ENCODE measurements at regions of chr3 and their contacts with region 1.

Region 1: DNA sequence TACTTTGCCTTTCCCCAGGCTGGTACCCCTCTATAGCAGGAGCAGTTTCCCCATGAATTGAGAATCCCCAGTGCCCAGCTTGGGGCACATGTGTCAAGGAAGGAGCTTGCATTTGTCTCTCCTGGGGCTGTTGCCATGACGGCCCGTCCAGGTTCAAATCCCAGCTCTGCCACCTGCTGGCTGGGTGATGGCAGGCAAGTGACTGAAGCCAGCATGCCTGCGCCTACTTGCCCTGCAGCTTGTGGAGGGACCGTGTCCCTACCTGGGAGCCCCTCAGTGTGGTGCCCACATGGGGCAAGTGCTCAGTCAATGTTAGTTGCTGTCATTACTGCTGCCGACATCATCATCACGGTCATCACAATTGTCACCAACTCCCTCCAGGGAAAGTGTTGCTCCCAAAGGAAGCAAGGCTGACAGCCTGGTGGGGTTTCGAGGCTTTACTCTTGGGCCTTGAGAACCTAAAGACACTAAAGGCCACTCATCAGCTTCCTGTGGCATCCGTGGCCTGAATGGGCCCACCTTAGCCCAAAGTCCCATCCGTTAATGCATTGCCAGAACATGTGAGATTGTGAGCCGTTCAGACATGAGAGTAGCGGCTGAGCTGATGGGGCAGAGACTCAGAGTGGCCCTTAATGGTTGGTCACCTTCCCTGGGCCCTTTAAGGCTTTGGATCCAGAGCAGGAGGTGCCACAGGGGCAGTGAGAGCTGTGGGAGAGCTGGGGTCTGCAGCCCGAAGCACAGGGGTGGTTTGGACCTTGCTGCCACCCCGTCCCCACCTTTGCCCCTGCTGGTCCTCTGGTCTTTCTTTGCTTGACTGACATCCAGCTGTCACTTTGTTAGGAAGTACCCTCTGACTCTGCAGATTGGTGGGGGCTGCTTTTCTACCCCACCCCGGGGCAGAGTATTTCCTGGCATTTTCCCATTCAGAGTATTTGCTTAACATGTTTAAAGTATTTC is 144.3 kb downstream of the DNAJB8 start:
- DNase-seq: peak; percentile 70
- H3K4me3 Mint-ChIP-seq: no peak overlapping the region
- H3K27ac Mint-ChIP-seq: no peak overlapping the region
- H3K4me1 Mint-ChIP-seq: peaks cover 27% of the 10 kb centered on the region
- H3K27me3 Mint-ChIP-seq: no peaks in the 10 kb centered on the region

Region 2: GRCh38 chr3:128095222-128095703 is 227.1 kb before region 1 on chr3:
- CTCF ChIA-PET with region 1: interaction called, 25 read pairs
- POLR2A ChIA-PET with region 1: no interaction called
- intact Hi-C with region 1: loop called (anchors 5 kb)
- DNase-seq: peak; percentile 84
- H3K4me3 Mint-ChIP-seq: no peak overlapping the region
- H3K27ac Mint-ChIP-seq: no peak overlapping the region
- H3K4me1 Mint-ChIP-seq: peaks cover 4% of the 10 kb centered on the region
- H3K27me3 Mint-ChIP-seq: no peaks in the 10 kb centered on the region

Region 3: GRCh38 chr3:128297401-128298138 is 24.8 kb before region 1 on chr3:
- CTCF ChIA-PET with region 1: no interaction called
- POLR2A ChIA-PET with region 1: no interaction called
- intact Hi-C with region 1: no loop called
- DNase-seq: no peak
- H3K4me3 Mint-ChIP-seq: no peak overlapping the region
- H3K27ac Mint-ChIP-seq: no peak overlapping the region
- H3K4me1 Mint-ChIP-seq: peaks cover 41% of the 10 kb centered on the region
- H3K27me3 Mint-ChIP-seq: no peaks in the 10 kb centered on the region